Heart right ventricle (tissue), 16 donors: ENCODE measurements at regions of chr12 and their contacts with region 1.

Region 1: GRCh38 chr12:24596768-24597388 is 352.0 kb downstream of the BCAT1 start:
- DNase-seq: no peak
- ATAC-seq: no peak
- H3K4me3 ChIP-seq: no peak overlapping the region
- H3K27ac ChIP-seq: no peak overlapping the region
- H3K4me1 ChIP-seq: peaks cover 0 to 8% (median 0%) of the 10 kb centered on the region in 9 donors
- H3K27me3 ChIP-seq: no peaks in the 10 kb centered on the region
- CTCF ChIP-seq: peak in 8 of 9 donors; percentile 22 to 74 (median 64)

Region 2: DNA sequence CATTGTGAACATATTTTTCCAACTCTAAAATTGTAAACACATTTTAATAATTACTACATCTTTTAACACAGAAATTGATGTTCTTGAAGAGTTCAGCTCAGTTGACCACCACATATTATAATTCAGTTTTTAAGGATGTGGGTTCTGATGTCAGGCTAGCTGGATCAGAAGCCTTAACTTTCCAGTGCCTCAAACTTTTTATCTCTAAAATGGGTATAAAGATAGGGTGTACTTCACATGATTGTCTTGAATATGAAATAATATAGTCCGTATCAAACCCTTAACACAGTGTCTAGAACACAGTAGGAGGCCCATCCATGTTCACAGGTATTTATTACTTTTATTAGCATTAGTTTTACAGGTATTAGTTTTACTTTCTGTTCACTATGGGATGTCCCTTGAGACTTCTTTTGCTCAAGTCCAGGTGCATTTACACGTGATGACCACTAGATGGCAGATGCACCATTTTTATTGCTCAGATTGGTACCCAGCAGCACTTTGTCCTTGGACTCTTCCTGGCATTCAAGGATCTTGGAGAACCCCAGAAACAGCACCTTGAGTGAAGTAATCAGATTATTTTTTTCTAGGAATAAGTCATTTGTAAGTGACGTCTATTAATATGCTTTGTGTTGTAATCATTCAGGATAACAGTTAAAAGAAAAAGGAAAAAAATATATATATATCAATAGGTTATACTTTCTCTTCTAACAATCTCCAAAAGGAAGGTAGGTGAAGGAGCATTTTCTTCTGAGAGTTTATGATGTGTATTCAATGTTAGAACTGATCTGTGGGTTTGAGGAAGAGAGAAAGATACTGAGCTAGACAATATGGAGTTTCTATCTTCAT is 1391.7 kb before region 1 on chr12:
- intact Hi-C with region 1: loop called in 3 of 10 experiments (anchors 10 kb)
- DNase-seq: peak in 1 of 2 donors; percentile 28
- ATAC-seq: peak in 4 of 8 donors; percentile 51 to 70 (median 64)
- H3K4me3 ChIP-seq: no peak overlapping the region
- H3K27ac ChIP-seq: no peak overlapping the region
- H3K4me1 ChIP-seq: no peaks in the 10 kb centered on the region
- H3K27me3 ChIP-seq: no peaks in the 10 kb centered on the region
- CTCF ChIP-seq: peak; percentile 86 to 96 (median 88)

Region 3: DNA sequence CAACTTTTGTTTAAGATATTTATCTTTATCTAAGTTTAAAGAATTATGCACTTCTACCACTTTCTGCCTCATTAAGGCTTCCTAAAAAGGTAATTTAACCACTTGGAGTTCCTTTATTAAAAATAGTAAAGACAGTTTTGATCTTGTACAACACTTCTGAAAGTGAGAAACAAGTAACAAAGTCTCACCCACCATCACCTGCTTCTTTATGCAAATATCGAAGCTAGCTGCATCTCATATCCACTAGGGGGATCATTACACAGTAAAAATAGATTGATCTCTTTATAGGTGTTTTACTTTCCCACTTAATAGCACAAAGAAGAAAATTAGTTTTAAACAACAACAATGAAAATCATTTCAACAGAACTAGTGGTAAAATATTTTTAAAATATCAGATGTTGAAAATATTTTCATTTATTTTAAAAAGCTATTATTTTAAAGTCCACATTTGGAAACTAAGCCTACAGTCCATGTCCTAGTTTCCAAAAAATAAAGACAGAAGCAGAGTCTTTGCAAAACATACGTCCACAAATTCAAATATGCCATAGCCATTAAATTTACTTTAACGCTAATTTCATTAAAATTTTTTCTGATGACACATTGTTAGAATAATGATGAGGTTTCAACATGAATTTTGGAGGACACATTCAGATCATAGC is 487.4 kb before region 1 on chr12:
- intact Hi-C with region 1: loop called in 1 of 10 experiments (anchors 5 kb)
- DNase-seq: no peak
- ATAC-seq: no peak
- H3K4me3 ChIP-seq: no peak overlapping the region
- H3K27ac ChIP-seq: no peak overlapping the region
- H3K4me1 ChIP-seq: no peaks in the 10 kb centered on the region
- H3K27me3 ChIP-seq: no peaks in the 10 kb centered on the region
- CTCF ChIP-seq: peak in 7 of 9 donors; percentile 17 to 59 (median 45)

Region 4: GRCh38 chr12:24360907-24361306 is 236.0 kb before region 1 on chr12:
- intact Hi-C with region 1: loop called in 2 of 10 experiments (anchors 10 kb)
- DNase-seq: no peak
- ATAC-seq: no peak
- H3K4me3 ChIP-seq: no peak overlapping the region
- H3K27ac ChIP-seq: no peak overlapping the region
- H3K4me1 ChIP-seq: no peaks in the 10 kb centered on the region
- H3K27me3 ChIP-seq: no peaks in the 10 kb centered on the region
- CTCF ChIP-seq: no peak

Region 5: DNA sequence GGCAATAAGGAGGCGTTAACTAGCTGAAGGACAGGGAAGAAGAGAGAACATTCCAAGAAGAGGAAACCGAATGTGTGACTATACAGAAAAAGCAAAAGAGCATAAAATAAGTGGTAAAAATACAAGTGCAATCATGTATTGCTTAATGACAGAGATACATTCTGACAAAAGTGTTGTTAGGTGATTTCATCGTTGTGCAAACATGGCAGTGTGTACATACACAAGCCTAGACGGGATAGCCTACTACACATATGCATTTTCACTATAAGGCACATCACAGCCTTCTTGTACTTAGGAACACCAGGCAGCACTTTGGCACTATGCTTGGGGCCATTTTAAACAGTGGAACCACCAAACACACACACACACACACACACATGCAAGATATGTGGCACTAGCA is 52.8 kb after region 1 on chr12:
- intact Hi-C with region 1: no loop called
- DNase-seq: no peak
- ATAC-seq: no peak
- H3K4me3 ChIP-seq: no peak overlapping the region
- H3K27ac ChIP-seq: no peak overlapping the region
- H3K4me1 ChIP-seq: no peaks in the 10 kb centered on the region
- H3K27me3 ChIP-seq: no peaks in the 10 kb centered on the region
- CTCF ChIP-seq: no peak